Right cardiac atrium (tissue), 5 donors: ENCODE measurements at regions of chr3 and their contacts with region 1.

Region 1: DNA sequence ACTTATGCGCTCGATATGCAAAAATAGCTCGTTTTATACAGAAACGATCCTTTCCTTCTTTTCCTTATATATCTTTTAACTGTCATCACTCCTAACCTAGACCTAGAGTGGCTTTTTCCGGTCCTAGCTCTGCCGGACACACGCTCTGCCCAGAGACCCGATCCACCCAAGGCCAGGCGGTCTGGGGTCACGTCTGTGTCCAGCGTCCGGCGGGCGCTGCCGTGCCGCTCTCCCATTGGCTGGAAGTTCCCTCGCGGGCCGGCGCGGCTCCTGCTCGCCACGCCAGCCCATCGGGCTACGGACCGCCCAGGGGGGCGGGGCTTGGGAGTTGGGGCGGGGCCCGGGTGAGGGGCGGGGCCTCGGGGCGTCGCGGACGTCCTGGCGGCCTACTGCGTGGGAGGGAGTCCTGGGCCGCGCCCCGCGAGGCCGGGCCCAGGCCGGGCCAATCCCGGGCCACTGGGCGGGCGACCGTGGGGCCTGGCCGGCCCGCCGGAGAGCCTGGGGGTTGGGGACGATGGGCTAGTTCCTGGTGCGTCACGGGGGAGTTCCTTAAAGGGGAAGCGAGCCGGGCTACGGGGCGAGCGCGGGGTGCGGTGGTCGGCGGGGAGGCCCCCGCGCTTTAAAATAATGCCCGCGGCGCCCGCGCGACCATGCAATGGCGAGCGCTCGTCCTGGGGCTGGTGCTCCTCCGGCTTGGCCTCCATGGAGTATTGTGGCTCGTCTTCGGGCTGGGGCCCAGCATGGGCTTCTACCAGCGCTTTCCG is at the start of gene EDEM1:
- DNase-seq: peak; percentile 95 to 98 (median 98)
- ATAC-seq: peak; percentile 98 to 99
- H3K4me3 ChIP-seq: peak within 1 kb of the TSS; percentile 97
- H3K27ac ChIP-seq: peak within 1 kb of the TSS; percentile 98
- H3K4me1 ChIP-seq: peaks cover 5% of the 10 kb centered on the region
- H3K27me3 ChIP-seq: no peaks in the 10 kb centered on the region
- total RNA-seq, gene EDEM1: 8.0 to 16.6 (median 10.4) TPM

Region 2: DNA sequence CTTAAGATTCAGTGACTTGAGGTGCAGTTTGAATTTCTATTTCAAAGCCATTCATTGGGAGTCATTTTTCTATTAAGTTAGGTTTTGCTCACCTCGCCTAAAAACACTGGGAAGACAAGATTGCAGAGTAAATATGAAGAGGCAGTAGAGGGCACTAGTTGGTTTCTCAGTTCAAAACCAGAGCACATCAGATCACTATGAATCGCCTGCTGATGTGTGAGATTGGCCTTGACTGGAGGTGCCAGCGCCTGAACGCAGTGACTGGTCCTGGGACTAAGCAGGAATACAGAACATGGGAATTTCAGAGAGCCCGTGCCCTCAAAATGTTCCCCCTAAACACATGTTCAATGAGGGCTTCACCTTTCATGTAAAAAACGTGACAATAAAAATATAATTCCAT is 465.2 kb before region 1 on chr3:
- intact Hi-C with region 1: loop called in 1 of 4 experiments (anchors 10 kb)
- DNase-seq: peak; percentile 57 to 80 (median 69)
- ATAC-seq: peak; percentile 76 to 78
- H3K4me3 ChIP-seq: no peak overlapping the region
- H3K27ac ChIP-seq: peak overlapping the region; percentile 39
- H3K4me1 ChIP-seq: no peaks in the 10 kb centered on the region
- H3K27me3 ChIP-seq: no peaks in the 10 kb centered on the region

Region 3: DNA sequence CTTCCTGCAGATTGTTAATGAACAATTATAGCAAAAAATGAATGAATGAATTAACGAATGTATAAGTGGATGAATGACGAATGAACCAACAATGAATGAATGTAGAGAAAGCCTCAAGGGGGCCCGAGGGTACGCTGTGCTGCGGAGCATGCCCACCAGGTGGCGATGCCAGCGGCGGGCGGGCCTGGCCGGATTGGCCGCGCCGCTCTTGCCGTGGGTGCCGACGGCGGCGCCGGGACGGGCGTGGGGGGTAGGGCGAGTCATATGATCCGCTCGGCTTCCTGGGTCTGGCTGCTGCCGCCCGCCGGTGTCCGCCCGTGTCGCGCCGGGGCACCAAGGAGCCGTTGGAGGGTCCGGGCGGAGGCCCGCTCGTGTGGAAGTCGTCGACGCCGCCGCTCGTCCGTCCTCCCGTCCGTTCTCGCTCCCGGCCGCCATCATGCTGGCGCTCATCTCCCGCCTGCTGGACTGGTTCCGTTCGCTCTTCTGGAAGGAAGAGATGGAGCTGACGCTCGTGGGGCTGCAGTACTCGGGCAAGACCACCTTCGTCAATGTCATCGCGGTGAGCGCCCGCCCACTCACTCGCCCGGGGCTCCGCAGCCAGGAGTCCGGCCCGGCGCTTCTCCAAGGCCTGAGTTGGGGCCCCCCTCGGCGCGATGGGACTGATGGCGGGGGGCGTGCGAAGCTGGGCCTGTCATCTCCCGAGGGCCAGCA is 65.2 kb before region 1 on chr3 and contains the start of gene ARL8B:
- intact Hi-C with region 1: loop called in 2 of 4 experiments (anchors 5 to 10 kb)
- DNase-seq: peak; percentile 93 to 97 (median 96)
- ATAC-seq: peak; percentile 99
- H3K4me3 ChIP-seq: peak within 1 kb of the TSS; percentile 94
- H3K27ac ChIP-seq: peak within 1 kb of the TSS; percentile 95
- H3K4me1 ChIP-seq: no peaks in the 10 kb centered on the region
- H3K27me3 ChIP-seq: no peaks in the 10 kb centered on the region
- total RNA-seq, gene ARL8B: 56.7 to 67.8 (median 60.9) TPM

Region 4: DNA sequence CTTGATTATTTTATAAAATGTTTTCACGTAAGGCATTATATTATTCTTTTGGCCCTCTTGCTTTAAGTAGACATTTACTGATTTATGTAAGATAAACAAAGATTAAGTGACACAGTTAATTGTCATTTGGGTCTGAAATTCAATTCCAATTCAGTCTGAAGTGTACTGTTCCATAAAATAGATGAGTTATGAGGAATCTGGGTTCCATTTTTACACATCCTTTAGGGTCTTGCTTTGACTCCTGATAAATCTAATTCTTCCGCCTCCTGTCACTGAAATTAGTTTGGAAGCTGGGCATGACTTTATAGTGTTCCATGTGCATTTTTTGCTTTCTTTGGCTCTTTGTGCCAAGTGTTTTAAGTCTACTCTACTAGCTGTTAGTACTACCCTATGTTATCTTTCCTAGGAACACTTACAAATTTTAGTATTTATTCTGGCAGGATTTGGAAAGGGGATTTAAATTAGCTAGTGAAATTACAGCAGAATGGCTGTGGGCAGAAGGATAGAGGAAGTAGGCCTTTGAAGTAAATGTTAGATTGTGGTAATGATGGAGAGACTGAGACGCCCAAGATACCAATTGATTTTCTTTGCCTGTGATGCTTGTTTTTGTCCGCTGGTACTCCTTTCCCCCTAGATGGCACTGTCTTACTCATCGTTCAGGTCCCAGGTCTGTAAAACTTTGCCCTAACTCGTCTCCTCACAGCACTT is 51.0 kb before region 1 on chr3:
- intact Hi-C with region 1: loop called in 1 of 4 experiments (anchors 10 kb)
- DNase-seq: no peak
- ATAC-seq: peak in 1 of 2 donors; percentile 9
- H3K4me3 ChIP-seq: no peak overlapping the region
- H3K27ac ChIP-seq: no peak overlapping the region
- H3K4me1 ChIP-seq: peaks cover 7% of the 10 kb centered on the region
- H3K27me3 ChIP-seq: no peaks in the 10 kb centered on the region

Region 5: GRCh38 chr3:5348229-5348902 is 161.0 kb after region 1 on chr3:
- intact Hi-C with region 1: no loop called
- DNase-seq: no peak
- ATAC-seq: no peak
- H3K4me3 ChIP-seq: no peak overlapping the region
- H3K27ac ChIP-seq: no peak overlapping the region
- H3K4me1 ChIP-seq: no peaks in the 10 kb centered on the region
- H3K27me3 ChIP-seq: no peaks in the 10 kb centered on the region